Ovary (tissue), 10 donors: ENCODE measurements at regions of chr5 and their contacts with region 1.

Region 1: DNA sequence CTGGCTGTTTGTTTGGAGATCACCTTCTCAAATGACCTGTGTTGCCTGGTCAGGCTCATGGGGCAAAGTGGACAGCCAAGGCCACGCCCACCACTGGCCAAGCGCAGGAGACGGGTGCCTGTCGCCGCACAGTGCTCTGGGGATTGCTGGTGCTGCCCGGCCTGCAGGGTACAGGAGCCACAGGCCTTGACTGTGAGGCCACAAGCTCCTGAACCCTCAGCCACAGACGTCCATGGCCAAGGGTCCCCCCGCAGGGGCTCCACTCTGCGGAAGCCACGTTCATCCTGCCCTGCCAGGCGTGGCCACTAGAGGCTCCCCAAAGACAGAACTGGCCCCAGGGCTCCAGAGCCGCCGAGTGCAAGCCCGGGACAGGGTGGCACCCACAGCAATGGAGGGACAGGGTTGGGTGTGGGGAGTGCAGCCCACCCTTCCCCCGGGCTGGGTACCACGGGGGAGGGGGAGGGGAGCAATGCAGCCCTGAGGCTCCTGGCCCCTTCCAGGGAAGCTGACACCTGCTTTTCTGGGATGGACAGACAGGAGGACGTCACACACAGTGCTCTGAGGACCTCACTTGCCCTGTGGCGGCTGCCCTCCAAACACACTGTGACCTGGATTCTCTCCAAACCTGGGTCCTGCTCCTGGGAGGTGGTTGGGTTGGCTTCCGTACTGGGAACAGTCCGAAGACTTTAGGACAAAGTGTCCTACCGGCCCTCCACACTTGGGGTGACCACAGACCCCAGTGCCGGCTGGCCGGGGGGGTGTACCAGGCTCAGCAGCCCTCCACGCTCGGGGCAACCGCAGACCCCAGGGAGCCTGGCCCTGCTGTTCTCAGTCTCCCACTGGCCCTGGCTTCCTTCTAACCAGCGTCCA is 21.5 kb downstream of the TPPP start:
- DNase-seq: peak; percentile 57 to 83 (median 79)
- H3K4me3 ChIP-seq: no peak overlapping the region
- H3K27ac ChIP-seq: no peak overlapping the region
- H3K4me1 ChIP-seq: peaks cover 33% of the 10 kb centered on the region
- H3K27me3 ChIP-seq: no peaks in the 10 kb centered on the region
- CTCF ChIP-seq: peak; percentile 85 to 88 (median 86)
- EP300 ChIP-seq: no peak
- POLR2A ChIP-seq: no peak

Region 2: GRCh38 chr5:892394-893136 is 220.9 kb after region 1 on chr5 and contains the starts of genes BRD9 and TRIP13:
- intact Hi-C with region 1: loop called in 2 of 4 experiments (anchors 5 kb)
- DNase-seq: peak; percentile 75 to 89 (median 81)
- H3K4me3 ChIP-seq: peak within 1 kb of the TSS; percentile 91
- H3K27ac ChIP-seq: peak within 1 kb of the TSS; percentile 33 to 81
- H3K4me1 ChIP-seq: peaks cover 9% of the 10 kb centered on the region
- H3K27me3 ChIP-seq: no peaks in the 10 kb centered on the region
- CTCF ChIP-seq: peak in 1 of 3 donors; percentile 20
- EP300 ChIP-seq: no peak
- POLR2A ChIP-seq: peak; percentile 51
- total RNA-seq, gene BRD9: 18.6 to 42.1 (median 35.0) TPM
- total RNA-seq, gene TRIP13: 1.3 to 3.9 (median 2.0) TPM

Region 3: GRCh38 chr5:902129-902916 is 230.6 kb after region 1 on chr5:
- intact Hi-C with region 1: loop called in 3 of 4 experiments (anchors 2 to 5 kb)
- DNase-seq: peak in 1 of 5 donors; percentile 6
- H3K4me3 ChIP-seq: no peak overlapping the region
- H3K27ac ChIP-seq: no peak overlapping the region
- H3K4me1 ChIP-seq: no peaks in the 10 kb centered on the region
- H3K27me3 ChIP-seq: no peaks in the 10 kb centered on the region
- CTCF ChIP-seq: no peak
- EP300 ChIP-seq: no peak
- POLR2A ChIP-seq: no peak

Region 4: DNA sequence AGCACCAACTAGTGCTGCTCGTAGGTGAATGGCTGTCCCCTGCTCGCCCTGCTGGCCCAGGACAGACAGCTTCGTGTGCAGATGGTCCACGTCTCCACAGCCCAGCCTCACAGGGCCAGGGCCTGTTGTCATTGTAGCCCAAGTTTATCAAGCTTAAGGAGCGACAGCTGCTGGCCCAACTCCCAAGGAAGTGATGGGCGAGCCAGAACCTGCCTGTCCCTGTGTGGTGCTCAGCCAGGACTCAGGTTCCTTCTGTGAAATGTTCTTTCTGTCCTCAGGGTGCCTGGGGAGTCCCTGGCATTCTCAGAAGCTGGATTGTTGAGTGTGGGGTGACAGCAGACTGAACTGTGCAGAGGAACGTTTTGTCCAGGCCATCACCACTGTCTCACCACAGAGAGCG is 237.4 kb after region 1 on chr5:
- intact Hi-C with region 1: loop called in 3 of 4 experiments (anchors 2 to 5 kb)
- DNase-seq: peak in 1 of 5 donors; percentile 9
- H3K4me3 ChIP-seq: no peak overlapping the region
- H3K27ac ChIP-seq: no peak overlapping the region
- H3K4me1 ChIP-seq: no peaks in the 10 kb centered on the region
- H3K27me3 ChIP-seq: no peaks in the 10 kb centered on the region
- CTCF ChIP-seq: no peak
- EP300 ChIP-seq: no peak
- POLR2A ChIP-seq: no peak

Region 5: GRCh38 chr5:1167728-1168709 is 496.3 kb after region 1 on chr5:
- intact Hi-C with region 1: loop called in 1 of 4 experiments (anchors 10 kb)
- DNase-seq: peak; percentile 62 to 72 (median 70)
- H3K4me3 ChIP-seq: no peak overlapping the region
- H3K27ac ChIP-seq: no peak overlapping the region
- H3K4me1 ChIP-seq: peaks cover 3% of the 10 kb centered on the region
- H3K27me3 ChIP-seq: no peaks in the 10 kb centered on the region
- CTCF ChIP-seq: peak; percentile 14 to 46 (median 46)
- EP300 ChIP-seq: no peak
- POLR2A ChIP-seq: no peak